ENCODE measurements at regions of chr11 and their contacts with region 1.

Region 1: DNA sequence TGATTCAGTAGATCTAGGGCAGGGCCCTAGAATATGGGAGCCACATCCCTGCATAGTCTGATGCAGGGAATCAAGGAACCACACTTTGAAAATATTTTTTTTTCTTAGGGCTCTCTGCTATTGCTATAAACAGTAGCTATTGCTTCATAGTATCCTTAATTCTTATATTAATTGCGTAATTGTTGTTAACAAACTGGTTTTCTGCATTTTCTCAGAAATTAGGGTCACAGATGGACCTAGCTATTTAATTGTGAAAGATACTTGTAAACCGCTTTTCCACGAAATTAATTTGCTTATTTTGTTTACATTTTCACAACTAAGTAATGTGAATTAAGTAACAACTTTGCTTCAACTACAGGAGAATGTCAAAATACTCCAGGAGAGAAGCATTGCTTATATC is 34.1 kb downstream of the NAALAD2 start:
- DNase-seq: no peak
- ATAC-seq: no peak
- H3K4me3 ChIP-seq: no peak overlapping the region
- H3K27ac ChIP-seq: no peak overlapping the region
- H3K4me1 ChIP-seq: no peaks in the 10 kb centered on the region
- H3K27me3 ChIP-seq: no peaks in the 10 kb centered on the region
- CTCF ChIP-seq: no peak
- POLR2A ChIP-seq: no peak

Region 2: GRCh38 chr11:90100431-90100830 is 68.1 kb before region 1 on chr11:
- intact Hi-C with region 1: loop called in 1 of 10 experiments (anchors 10 kb)
- DNase-seq: no peak
- ATAC-seq: no peak
- H3K4me3 ChIP-seq: no peak overlapping the region
- H3K27ac ChIP-seq: no peak overlapping the region
- H3K4me1 ChIP-seq: no peaks in the 10 kb centered on the region
- H3K27me3 ChIP-seq: no peaks in the 10 kb centered on the region
- CTCF ChIP-seq: no peak
- POLR2A ChIP-seq: no peak

Region 3: DNA sequence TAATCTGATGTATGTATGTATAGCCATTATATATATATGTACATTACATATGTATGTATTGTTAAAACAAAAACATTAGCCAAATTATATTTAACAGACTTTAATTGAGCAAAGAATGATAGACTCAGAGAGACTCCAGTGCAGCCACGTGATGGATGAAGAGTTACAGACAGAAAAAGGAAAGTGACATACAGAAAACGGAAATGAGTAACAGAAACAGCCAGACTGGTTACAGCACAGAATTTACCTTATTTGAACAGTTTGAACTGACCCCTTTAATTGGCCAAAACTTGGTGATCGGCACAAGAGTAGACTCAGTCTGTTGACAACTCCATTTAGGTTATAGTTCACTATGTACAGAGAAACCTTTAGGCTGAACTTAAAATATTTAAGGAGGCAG is 19.3 kb after region 1 on chr11:
- intact Hi-C with region 1: no loop called
- DNase-seq: no peak
- ATAC-seq: no peak
- H3K4me3 ChIP-seq: no peak overlapping the region
- H3K27ac ChIP-seq: no peak overlapping the region
- H3K4me1 ChIP-seq: no peaks in the 10 kb centered on the region
- H3K27me3 ChIP-seq: no peaks in the 10 kb centered on the region
- CTCF ChIP-seq: no peak
- POLR2A ChIP-seq: no peak

Region 4: GRCh38 chr11:90468923-90469322 is 300.4 kb after region 1 on chr11:
- intact Hi-C with region 1: no loop called
- DNase-seq: no peak
- ATAC-seq: peak; percentile 57 to 79 (median 67)
- H3K4me3 ChIP-seq: no peak overlapping the region
- H3K27ac ChIP-seq: no peak overlapping the region
- H3K4me1 ChIP-seq: no peaks in the 10 kb centered on the region
- H3K27me3 ChIP-seq: no peaks in the 10 kb centered on the region
- CTCF ChIP-seq: no peak
- POLR2A ChIP-seq: no peak